ENCODE measurements at regions of chr1 and their contacts with region 1.

Region 1: DNA sequence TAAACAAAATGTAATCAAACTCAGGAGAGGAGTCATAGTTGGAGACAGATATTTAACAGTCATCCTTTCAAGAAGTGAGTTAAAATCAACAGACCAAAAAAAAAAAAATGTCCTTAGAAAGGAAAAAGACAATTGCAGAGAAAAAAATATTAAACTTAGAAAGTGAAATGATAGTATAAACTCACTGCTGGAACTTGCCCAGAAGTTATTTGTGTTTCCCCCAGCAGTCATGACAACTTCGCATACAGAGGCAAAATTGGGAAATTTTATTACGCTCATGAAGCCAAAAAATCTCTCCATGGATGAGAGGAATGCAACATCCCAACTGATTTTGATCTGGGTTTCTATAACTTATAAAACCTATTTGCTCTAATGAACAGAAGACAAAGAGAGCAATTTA is 198.2 kb downstream of the LRRC7 start:
- DNase-seq: no peak
- H3K4me3 ChIP-seq: no peak overlapping the region
- H3K27ac ChIP-seq: no peak overlapping the region
- H3K4me1 ChIP-seq: no peaks in the 10 kb centered on the region
- H3K27me3 ChIP-seq: no peaks in the 10 kb centered on the region
- CTCF ChIP-seq: no peak
- EP300 ChIP-seq: no peak
- POLR2A ChIP-seq: no peak

Region 2: GRCh38 chr1:68470388-68470970 is 1295.5 kb before region 1 on chr1:
- in situ Hi-C with region 1: loop called in 1 of 4 experiments (anchors 25 kb)
- intact Hi-C with region 1: no loop called
- DNase-seq: no peak
- H3K4me3 ChIP-seq: no peak overlapping the region
- H3K27ac ChIP-seq: no peak overlapping the region
- H3K4me1 ChIP-seq: no peaks in the 10 kb centered on the region
- H3K27me3 ChIP-seq: no peaks in the 10 kb centered on the region
- CTCF ChIP-seq: peak in 4 of 5 experiments; percentile 37 to 58 (median 40)
- EP300 ChIP-seq: no peak
- POLR2A ChIP-seq: no peak

Region 3: GRCh38 chr1:69363236-69363635 is 402.7 kb before region 1 on chr1:
- in situ Hi-C with region 1: no loop called
- intact Hi-C with region 1: no loop called
- DNase-seq: no peak
- H3K4me3 ChIP-seq: no peak overlapping the region
- H3K27ac ChIP-seq: no peak overlapping the region
- H3K4me1 ChIP-seq: no peaks in the 10 kb centered on the region
- H3K27me3 ChIP-seq: no peaks in the 10 kb centered on the region
- CTCF ChIP-seq: no peak
- EP300 ChIP-seq: no peak
- POLR2A ChIP-seq: no peak

Region 4: DNA sequence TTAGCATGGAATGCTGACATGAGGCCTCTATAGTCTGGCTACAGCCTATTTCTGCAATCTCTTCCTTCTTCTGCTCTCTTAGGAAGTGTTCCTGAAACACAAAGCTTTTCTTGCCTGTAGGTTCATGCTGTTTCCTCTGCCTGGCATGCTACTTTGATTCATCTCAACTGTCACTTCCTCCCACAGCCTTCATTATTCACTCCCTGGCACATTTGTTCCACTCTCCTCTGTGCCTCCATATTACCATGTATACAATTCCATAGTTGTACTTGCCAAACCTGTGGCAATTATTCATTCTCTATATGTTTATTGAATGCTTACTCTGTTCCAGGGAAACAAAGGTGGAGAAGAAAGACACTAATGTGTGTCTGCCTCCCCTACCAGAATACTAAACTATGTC is 12.0 kb after region 1 on chr1:
- in situ Hi-C with region 1: no loop called
- intact Hi-C with region 1: loop called (anchors 2 kb)
- DNase-seq: no peak
- H3K4me3 ChIP-seq: no peak overlapping the region
- H3K27ac ChIP-seq: no peak overlapping the region
- H3K4me1 ChIP-seq: no peaks in the 10 kb centered on the region
- H3K27me3 ChIP-seq: no peaks in the 10 kb centered on the region
- CTCF ChIP-seq: no peak
- EP300 ChIP-seq: no peak
- POLR2A ChIP-seq: no peak

Region 5: DNA sequence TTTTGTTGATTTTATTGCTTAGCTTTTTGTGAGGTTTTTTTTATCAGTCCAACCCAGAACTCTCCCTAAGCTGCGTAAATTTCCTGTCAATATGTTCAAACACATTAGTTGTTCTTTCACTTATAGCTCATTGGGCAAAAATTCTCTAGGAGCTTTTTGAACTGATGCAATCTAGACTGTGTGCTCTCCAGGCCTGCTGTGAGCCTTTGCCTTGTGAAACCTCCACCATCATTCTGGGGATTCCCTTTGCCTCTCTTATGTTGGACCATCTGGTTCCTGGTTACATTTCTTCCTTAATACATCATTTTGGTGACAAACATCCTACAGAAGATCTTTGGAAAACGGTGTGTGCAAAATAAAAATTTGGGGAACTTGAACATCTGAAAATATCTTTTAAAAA is 49.0 kb after region 1 on chr1:
- in situ Hi-C with region 1: no loop called
- intact Hi-C with region 1: no loop called
- DNase-seq: no peak
- H3K4me3 ChIP-seq: no peak overlapping the region
- H3K27ac ChIP-seq: no peak overlapping the region
- H3K4me1 ChIP-seq: no peaks in the 10 kb centered on the region
- H3K27me3 ChIP-seq: no peaks in the 10 kb centered on the region
- CTCF ChIP-seq: no peak
- EP300 ChIP-seq: no peak
- POLR2A ChIP-seq: no peak